CD8-positive, alpha-beta memory T cell (primary cell): ENCODE measurements at regions of chr2 and their contacts with region 1.

Region 1: GRCh38 chr2:64653349-64654062 is at the start of gene SERTAD2:
- DNase-seq: peak; percentile 80 to 92 (median 87)
- H3K4me3 ChIP-seq: peak within 1 kb of the TSS; percentile 90
- H3K4me3 Mint-ChIP-seq: peak within 1 kb of the TSS; percentile 90 to 95 (median 92)
- H3K27ac ChIP-seq: peak within 1 kb of the TSS; percentile 76
- H3K27ac Mint-ChIP-seq: peak within 1 kb of the TSS; percentile 88 to 99 (median 96)
- H3K4me1 ChIP-seq: peaks cover 55% of the 10 kb centered on the region
- H3K4me1 Mint-ChIP-seq: peaks cover 51 to 71% (median 56%) of the 10 kb centered on the region in 3 donors
- H3K27me3 ChIP-seq: no peaks in the 10 kb centered on the region
- H3K27me3 Mint-ChIP-seq: no peaks in the 10 kb centered on the region
- total RNA-seq, gene SERTAD2: 20.6 to 21.4 TPM

Region 2: GRCh38 chr2:64565949-64566710 is 87.4 kb before region 1 on chr2:
- CTCF ChIA-PET with region 1: no interaction called
- POLR2A ChIA-PET with region 1: no interaction called
- DNase-seq: no peak
- H3K4me3 ChIP-seq: no peak overlapping the region
- H3K4me3 Mint-ChIP-seq: peak overlapping the region in 1 of 7 donors; percentile 3
- H3K27ac ChIP-seq: no peak overlapping the region
- H3K27ac Mint-ChIP-seq: peak overlapping the region in 5 of 8 donors; percentile 12 to 75 (median 33)
- H3K4me1 ChIP-seq: peaks cover 21% of the 10 kb centered on the region
- H3K4me1 Mint-ChIP-seq: peaks cover 32 to 38% (median 38%) of the 10 kb centered on the region in 3 donors
- H3K27me3 ChIP-seq: no peaks in the 10 kb centered on the region
- H3K27me3 Mint-ChIP-seq: no peaks in the 10 kb centered on the region

Region 3: DNA sequence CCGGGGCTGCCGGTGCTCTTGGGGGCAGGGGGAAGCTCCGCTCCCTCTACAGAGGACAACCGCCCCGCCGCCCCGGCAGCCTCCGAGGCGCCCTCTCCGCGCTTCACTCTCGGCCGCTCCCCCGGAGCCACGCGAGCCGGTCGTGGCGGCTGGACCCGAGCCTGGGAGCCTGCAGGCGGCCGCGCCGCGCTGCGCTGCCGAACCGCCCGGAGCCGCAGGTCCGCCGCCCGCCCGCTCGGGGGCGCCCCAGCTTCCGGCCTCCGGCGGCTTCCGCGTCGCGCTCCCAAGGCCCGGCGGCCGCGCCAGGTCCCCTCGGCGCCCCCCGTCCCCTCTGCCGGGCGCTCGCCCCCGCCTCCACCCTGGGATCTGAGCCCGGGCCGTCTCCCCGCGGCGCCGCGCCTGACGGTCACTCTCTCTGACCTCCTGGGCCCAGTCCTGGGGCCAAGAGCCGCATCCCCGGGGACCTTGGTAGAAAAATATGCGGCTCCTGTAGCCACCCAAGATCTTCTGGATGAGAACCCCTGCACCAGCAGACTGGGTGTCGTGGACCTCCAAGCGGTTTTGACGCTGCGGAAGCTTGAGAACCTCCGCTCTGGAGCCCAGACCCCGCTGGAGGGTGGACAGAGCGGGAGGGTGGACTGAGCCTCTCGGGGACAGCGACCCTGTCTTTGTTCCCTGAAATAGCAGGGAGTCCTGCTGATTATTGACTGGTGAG is 44.1 kb before region 1 on chr2:
- CTCF ChIA-PET with region 1: interaction called, 43 read pairs
- POLR2A ChIA-PET with region 1: interaction called, 33 read pairs
- DNase-seq: peak; percentile 58 to 76 (median 73)
- H3K4me3 ChIP-seq: peak overlapping the region; percentile 76
- H3K4me3 Mint-ChIP-seq: peak overlapping the region; percentile 68 to 91 (median 77)
- H3K27ac ChIP-seq: peak overlapping the region; percentile 75
- H3K27ac Mint-ChIP-seq: peak overlapping the region in 7 of 8 donors; percentile 30 to 90 (median 68)
- H3K4me1 ChIP-seq: peaks cover 28% of the 10 kb centered on the region
- H3K4me1 Mint-ChIP-seq: peaks cover 20 to 40% (median 29%) of the 10 kb centered on the region in 3 donors
- H3K27me3 ChIP-seq: no peaks in the 10 kb centered on the region
- H3K27me3 Mint-ChIP-seq: no peaks in the 10 kb centered on the region

Region 4: DNA sequence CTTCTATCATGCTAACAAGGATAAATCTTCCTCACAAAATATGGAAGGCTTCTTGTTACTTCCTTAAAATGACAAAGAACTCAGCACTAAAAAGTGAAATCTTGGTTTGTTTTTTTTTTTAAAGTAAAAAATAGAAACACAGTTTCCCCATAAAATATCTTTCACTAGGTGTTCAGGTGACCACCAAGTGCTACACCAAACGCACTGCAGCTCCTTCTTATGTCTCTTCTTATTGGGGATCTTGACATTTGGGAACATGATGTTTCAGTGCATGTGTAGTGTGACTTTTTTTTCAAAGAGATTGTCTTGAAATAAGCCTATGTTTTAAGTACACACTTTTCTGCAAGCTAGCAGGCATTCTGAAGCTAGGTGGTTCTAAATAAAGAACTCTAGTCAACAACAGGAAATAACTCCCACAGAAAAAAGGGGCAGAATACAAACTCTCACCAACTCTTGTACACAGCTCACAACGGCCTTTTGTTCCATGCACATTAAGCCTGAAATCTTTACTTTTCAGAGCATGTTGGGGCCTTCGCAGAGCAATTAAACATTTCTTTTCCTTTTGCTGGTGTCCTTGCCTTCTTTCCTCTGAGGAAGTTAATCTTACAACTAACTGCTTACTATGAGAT is 13.4 kb after region 1 on chr2:
- CTCF ChIA-PET with region 1: interaction called, 81 read pairs
- POLR2A ChIA-PET with region 1: interaction called, 66 read pairs
- DNase-seq: no peak
- H3K4me3 ChIP-seq: peak overlapping the region; percentile 1
- H3K4me3 Mint-ChIP-seq: peak overlapping the region in 6 of 7 donors; percentile 12 to 62 (median 44)
- H3K27ac ChIP-seq: no peak overlapping the region
- H3K27ac Mint-ChIP-seq: peak overlapping the region; percentile 15 to 95 (median 82)
- H3K4me1 ChIP-seq: peaks cover 35% of the 10 kb centered on the region
- H3K4me1 Mint-ChIP-seq: peaks cover 4 to 17% (median 15%) of the 10 kb centered on the region in 3 donors
- H3K27me3 ChIP-seq: no peaks in the 10 kb centered on the region
- H3K27me3 Mint-ChIP-seq: no peaks in the 10 kb centered on the region

Region 5: DNA sequence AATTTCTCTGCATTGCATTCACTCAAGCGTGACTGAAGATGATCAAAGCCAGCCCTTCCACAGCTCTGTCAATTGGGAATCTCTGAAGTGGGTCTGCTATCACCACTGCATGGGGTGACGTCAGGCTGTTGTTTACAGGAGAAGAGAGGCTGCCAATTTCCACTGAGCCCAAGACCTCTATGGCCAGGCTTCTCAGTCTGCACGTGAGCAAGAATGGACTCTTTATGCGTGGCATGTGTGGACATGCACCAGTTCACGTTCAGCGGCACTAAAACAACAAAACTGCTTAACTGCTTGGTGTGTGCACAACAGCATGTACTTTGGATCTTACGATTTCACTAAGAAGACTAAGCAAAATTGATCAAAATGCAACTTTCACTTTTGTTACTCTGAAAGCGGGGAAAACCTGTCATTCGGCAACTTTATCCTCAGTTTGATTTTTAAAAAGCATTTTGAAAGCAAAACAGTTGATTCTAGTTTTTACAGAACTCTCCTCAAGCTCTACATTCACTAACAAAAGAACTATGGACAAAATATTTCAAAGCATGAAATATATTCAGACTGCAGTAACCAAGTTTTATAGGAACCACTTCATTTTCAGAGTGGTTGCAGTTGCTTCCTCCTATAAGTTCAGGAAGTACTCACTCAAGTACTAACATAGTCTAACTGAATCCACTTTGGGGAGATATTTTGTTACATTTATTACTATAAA is 77.2 kb after region 1 on chr2:
- CTCF ChIA-PET with region 1: interaction called, 33 read pairs
- POLR2A ChIA-PET with region 1: interaction called, 44 read pairs
- DNase-seq: peak; percentile 6 to 63 (median 38)
- H3K4me3 ChIP-seq: peak overlapping the region; percentile 70
- H3K4me3 Mint-ChIP-seq: peak overlapping the region; percentile 85 to 94 (median 88)
- H3K27ac ChIP-seq: peak overlapping the region; percentile 60
- H3K27ac Mint-ChIP-seq: peak overlapping the region; percentile 87 to 99 (median 96)
- H3K4me1 ChIP-seq: peaks cover 44% of the 10 kb centered on the region
- H3K4me1 Mint-ChIP-seq: peaks cover 39 to 58% (median 48%) of the 10 kb centered on the region in 3 donors
- H3K27me3 ChIP-seq: no peaks in the 10 kb centered on the region
- H3K27me3 Mint-ChIP-seq: no peaks in the 10 kb centered on the region

Region 6: DNA sequence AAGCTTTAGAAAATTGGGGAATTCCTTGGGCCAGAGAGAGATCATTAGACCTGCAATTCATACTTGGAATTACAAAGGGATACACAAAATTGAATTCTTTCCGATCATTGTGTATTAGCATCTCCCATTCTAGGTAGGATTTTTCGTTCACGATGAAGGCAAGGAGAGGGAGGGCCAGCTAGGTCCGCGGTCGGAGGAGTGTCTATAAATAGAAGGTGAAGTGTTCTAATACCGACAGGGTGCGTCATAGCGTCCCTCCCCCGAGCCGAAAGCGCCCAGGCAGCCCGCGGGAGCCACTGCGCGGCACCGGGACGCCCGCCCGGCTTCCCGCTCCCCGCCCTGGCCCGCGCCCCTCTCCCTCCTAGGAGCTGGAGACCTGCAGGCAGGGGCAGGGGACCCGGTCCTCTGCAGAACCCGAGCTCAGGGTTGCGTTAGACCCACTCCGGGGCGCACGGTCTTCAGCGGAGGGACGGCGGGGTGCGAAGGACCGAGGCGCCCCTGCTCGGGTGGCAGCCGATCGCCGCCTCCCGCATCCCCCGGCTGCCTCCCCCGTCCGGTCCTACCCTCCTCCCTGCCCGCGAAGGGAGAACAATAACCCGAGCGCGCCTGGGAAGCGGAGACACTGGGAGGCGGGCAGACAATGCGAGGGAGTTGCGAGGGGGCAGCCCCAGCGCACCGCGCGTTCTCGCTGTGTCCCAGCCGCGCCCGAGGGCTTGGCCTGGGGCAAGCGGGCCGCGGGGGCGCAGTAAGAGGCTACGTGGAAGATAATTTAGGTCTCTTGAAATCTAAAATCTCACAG is 114.4 kb after region 1 on chr2:
- CTCF ChIA-PET with region 1: interaction called, 15 read pairs
- POLR2A ChIA-PET with region 1: interaction called, 32 read pairs
- DNase-seq: peak; percentile 57 to 87 (median 68)
- H3K4me3 ChIP-seq: peak overlapping the region; percentile 74
- H3K4me3 Mint-ChIP-seq: peak overlapping the region; percentile 87 to 95 (median 90)
- H3K27ac ChIP-seq: peak overlapping the region; percentile 71
- H3K27ac Mint-ChIP-seq: peak overlapping the region; percentile 58 to 97 (median 92)
- H3K4me1 ChIP-seq: peaks cover 10% of the 10 kb centered on the region
- H3K4me1 Mint-ChIP-seq: peaks cover 16 to 22% (median 21%) of the 10 kb centered on the region in 3 donors
- H3K27me3 ChIP-seq: no peaks in the 10 kb centered on the region
- H3K27me3 Mint-ChIP-seq: no peaks in the 10 kb centered on the region

Region 7: DNA sequence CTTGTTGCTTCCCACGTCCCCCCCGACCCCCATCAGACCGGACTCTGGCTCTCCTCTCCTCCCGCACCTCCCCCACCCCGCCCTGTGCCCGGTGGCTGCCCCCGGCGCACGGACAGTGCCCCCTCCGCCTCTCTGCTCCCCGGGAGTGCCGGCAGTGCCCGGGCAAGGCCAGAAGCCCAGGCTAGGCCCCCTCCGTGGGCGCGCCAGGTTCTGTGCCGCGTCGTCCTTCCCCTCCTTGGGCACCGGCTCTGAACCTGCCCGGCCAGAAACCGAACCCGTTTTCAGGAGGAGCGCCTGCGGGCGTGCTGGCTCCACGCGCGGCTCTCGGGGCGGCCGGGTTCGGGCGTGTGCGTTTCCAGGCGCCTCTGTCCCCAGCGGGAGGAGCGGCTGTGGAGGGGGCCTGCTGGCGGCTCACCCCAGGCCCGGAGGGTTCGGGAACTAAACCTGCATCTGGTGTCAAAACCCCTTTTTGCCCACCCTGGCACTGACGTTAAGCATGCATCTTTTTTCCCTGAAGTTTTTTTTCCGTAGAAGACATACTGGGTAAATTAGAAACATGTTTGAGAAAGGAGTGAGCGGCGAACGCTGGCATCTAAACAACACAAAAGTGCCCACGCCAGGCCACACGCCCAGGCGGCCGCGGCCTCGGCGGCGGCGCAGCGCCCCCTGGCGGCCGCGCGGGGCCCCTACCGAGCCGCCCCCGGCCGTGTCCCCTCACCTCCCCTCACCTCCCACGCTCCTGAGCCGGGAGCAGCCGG is 211.7 kb after region 1 on chr2:
- CTCF ChIA-PET with region 1: interaction called, 14 read pairs
- POLR2A ChIA-PET with region 1: interaction called, 4 read pairs
- DNase-seq: peak; percentile 48 to 74 (median 70)
- H3K4me3 ChIP-seq: peak overlapping the region; percentile 63
- H3K4me3 Mint-ChIP-seq: peak overlapping the region in 5 of 7 donors; percentile 74 to 91 (median 79)
- H3K27ac ChIP-seq: no peak overlapping the region
- H3K27ac Mint-ChIP-seq: peak overlapping the region in 3 of 8 donors; percentile 71 to 80 (median 74)
- H3K4me1 ChIP-seq: peaks cover 8% of the 10 kb centered on the region
- H3K4me1 Mint-ChIP-seq: peaks cover 0 to 4% (median 0%) of the 10 kb centered on the region in 3 donors
- H3K27me3 ChIP-seq: no peaks in the 10 kb centered on the region
- H3K27me3 Mint-ChIP-seq: peaks cover 7% of the 10 kb centered on the region in 2 donors

Region 8: GRCh38 chr2:64963719-64964118 is 310.2 kb after region 1 on chr2:
- CTCF ChIA-PET with region 1: no interaction called
- POLR2A ChIA-PET with region 1: no interaction called
- DNase-seq: no peak
- H3K4me3 ChIP-seq: no peak overlapping the region
- H3K4me3 Mint-ChIP-seq: no peak overlapping the region
- H3K27ac ChIP-seq: no peak overlapping the region
- H3K27ac Mint-ChIP-seq: no peak overlapping the region
- H3K4me1 ChIP-seq: no peaks in the 10 kb centered on the region
- H3K4me1 Mint-ChIP-seq: no peaks in the 10 kb centered on the region
- H3K27me3 ChIP-seq: no peaks in the 10 kb centered on the region
- H3K27me3 Mint-ChIP-seq: peaks cover 0 to 3% of the 10 kb centered on the region in 2 donors